ENCODE measurements at regions of chr9 and their contacts with region 1.

Region 1: DNA sequence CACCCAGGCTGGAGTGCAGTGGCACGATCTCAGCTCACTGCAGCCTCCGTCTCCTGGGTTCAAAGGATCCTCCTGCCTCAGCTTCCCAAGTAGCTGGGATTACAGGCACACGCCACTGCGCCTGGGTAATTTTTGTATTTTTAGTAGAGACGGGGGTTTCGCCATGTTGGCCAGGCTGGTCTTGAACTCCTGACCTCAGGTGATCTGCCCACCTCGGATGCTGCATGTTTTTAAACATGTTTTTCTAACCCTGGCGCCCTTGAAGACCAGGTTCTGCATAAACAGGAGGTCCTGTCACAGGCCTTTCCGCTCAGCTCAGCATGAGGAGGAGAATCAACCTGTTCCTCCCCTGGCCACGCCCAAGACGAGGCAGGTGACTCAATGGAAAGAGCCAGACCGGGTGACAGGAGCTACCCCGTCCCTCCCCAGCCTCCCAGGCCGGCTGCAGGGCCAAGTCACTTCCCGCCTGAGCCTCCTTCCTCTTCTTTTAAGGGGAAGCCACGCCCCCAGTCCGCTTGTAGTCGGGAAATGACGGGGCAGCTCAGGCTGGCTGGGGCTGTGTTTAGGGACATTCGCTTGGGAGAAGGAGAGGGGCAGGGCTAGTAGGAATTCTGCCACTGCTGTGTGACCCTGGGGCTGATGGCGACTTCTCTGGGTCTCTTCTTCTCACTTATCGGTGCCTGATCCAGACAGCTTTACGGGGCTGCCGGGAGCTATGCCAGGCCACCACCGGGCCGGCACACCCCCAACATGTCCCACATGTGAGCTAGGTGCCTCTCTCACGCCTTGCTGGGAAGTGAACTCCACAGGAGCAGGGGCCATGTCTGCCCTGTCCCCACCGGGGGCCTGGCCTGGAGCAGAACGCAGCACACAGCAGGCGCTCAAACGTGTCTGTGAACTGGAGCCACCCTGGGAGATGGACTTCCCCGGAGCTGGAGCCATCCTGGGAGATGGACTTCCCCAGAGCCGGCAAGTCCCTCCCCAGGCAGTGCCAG is 6.1 kb downstream of the NOTCH1 start:
- DNase-seq: peak; percentile 89
- ATAC-seq: peak; percentile 85
- H3K4me3 Mint-ChIP-seq: peak overlapping the region; percentile 88
- H3K27ac Mint-ChIP-seq: peak overlapping the region; percentile 98
- H3K4me1 Mint-ChIP-seq: peaks cover 39% of the 10 kb centered on the region
- H3K27me3 Mint-ChIP-seq: no peaks in the 10 kb centered on the region

Region 2: DNA sequence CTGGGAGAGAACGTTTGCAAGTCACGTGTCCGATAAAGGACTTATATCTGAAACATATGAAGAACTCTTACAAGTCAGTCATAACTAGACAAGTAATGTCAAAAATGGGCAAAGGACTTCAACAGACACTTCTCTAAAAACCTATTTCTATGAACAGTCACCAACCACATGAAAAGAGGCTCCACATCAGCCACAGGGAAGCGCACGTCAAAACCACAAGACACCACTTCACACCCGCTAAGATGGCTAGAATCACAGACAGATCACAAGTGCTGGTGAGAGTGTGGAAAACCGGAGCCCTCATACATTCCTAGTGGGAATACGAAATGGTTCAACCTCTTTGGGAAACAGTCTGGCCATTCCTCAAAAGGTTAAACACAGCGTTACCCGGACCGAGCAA is 154.7 kb before region 1 on chr9:
- POLR2A ChIA-PET with region 1: no interaction called
- DNase-seq: peak; percentile 57
- ATAC-seq: peak; percentile 78
- H3K4me3 Mint-ChIP-seq: peak overlapping the region; percentile 54
- H3K27ac Mint-ChIP-seq: peak overlapping the region; percentile 14
- H3K4me1 Mint-ChIP-seq: peaks cover 21% of the 10 kb centered on the region
- H3K27me3 Mint-ChIP-seq: no peaks in the 10 kb centered on the region

Region 3: DNA sequence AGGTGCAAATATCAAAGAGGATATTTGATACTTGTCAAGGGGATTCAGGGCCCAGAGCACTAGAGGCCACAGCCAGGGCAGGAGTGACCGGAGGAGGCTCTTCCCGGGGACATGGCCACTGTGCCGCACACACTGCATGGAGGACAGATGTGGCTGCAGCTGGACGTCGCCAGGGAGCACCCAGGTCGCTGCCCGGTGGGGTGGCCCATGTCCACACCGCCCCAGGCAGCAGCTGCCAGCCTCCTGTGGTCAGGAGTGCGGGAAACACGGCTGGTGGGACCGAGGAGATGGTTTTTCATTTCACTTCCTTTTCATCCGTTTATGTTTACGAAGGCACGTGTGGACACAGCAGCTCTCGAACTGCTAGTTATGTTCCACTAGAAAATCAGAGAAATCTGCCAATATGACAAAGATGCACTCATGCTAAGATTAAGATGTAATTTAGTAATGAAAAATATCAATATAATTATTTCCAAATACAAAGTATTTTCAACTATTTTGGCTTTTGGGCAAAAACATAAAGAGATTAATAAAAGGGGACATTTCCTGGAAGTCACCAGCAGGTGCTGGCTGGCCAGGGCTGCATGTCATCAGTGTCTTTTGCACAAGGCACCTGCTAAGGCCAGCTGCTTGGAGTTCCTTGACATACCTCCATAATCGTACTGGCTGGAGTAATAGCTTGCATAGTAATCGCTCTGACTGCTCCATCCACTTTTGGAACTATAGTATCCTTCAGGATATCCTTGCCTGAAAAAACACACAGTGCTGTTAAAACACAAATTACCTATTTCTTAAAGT is 71.8 kb before region 1 on chr9:
- POLR2A ChIA-PET with region 1: no interaction called
- DNase-seq: no peak
- ATAC-seq: no peak
- H3K4me3 Mint-ChIP-seq: no peak overlapping the region
- H3K27ac Mint-ChIP-seq: no peak overlapping the region
- H3K4me1 Mint-ChIP-seq: no peaks in the 10 kb centered on the region
- H3K27me3 Mint-ChIP-seq: no peaks in the 10 kb centered on the region

Region 4: DNA sequence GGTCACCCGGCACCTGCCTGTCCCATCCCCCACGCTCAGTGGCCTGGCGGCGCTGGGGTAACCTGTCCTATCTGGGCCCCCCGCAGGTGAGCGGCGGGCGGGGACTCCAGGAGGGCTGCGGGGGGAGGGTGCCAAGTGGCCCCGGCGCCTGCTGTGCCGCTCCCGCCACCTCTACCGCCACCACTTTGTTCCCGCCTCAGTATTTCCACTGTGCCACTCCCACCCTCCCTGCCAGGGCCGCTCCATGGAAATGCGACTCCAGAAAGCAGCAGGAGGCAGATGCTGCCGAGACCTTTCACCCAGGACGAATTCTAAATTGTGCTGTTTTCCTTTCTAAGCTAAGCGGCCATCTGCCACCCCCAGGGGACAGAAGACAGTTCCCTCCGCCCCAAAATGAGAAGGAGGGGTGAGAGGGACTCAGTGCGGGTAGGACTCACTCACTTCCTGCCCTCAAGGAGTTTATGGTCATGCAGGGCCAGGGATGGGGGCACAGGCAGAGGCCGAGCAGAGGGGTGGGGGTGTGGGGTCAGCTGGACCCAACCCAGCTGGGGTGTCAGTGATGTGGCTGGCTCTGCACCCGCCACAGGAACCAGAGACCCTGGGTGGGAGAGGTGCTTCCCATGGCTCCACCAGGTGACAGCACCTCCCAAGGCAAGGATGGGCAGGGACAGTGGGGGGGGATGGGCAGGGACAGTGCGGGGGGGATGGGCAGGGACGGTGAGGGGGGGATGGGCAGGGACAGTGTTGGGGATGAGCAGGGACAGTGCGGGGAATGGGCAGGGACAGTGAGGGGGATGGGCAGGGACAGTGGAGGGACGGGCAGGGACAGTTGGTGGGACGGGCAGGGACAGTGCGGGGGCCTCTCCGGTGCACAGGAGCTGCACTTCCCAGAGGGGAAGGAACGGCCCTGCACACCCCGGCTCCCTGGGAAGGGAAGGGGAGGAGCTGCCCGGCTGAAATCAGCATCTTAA is 11.7 kb before region 1 on chr9:
- POLR2A ChIA-PET with region 1: interaction called, 22 read pairs
- DNase-seq: no peak
- ATAC-seq: peak; percentile 9
- H3K4me3 Mint-ChIP-seq: no peak overlapping the region
- H3K27ac Mint-ChIP-seq: peak overlapping the region; percentile 67
- H3K4me1 Mint-ChIP-seq: peaks cover 20% of the 10 kb centered on the region
- H3K27me3 Mint-ChIP-seq: no peaks in the 10 kb centered on the region

Region 5: GRCh38 chr9:136644598-136645351 is 105.1 kb after region 1 on chr9:
- POLR2A ChIA-PET with region 1: no interaction called
- DNase-seq: peak; percentile 80
- ATAC-seq: peak; percentile 96
- H3K4me3 Mint-ChIP-seq: no peak overlapping the region
- H3K27ac Mint-ChIP-seq: no peak overlapping the region
- H3K4me1 Mint-ChIP-seq: no peaks in the 10 kb centered on the region
- H3K27me3 Mint-ChIP-seq: peaks cover 46% of the 10 kb centered on the region

Measured in activated naive CD8-positive, alpha-beta T cell treated with anti-CD3 and anti-CD28 coated beads, Interleukin-2, amount 10 ng/mL, durations not matched to agents 7 days and 5 days (primary cell).